Right ventricle myocardium inferior (tissue), 1 donor: ENCODE measurements at regions of chr9 and their contacts with region 1.

Region 1: DNA sequence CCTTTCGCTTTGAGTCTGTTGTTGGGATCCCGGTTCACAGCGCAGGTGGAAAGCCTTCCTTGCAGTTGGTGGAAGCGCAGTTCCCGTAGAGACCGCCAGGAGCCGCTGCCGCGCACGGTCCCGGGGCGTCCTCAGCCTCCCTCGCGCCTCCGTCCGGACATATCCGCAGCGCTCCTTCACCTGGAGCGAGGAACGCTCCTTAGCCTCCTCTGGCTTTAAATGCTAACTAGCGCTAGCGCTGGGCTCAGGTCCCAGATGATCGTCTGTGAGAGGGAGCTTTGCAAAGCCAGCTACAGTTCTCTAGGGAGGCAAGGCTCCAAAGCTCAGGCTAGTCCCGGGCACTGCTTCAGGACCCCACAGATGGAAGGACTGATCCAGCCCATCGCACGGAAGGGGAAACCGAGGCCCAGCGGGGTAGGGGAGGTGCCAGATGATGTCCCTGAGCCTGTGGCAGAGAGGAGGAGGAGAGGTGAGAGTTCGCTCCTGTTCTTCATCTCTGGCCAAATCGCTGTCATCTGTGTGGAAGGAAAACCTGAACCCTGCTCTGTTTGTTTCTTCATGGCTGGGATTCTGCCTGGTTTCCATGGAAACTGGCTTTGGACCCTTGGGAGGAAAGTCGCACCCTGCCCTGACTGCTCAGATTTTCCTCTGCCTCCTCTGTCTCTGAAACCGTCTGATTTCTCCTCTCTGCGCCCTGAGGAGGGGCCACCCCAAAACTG is 31.4 kb downstream of the COL15A1 start:
- DNase-seq: peak; percentile 93
- ATAC-seq: peak; percentile 59

Region 2: DNA sequence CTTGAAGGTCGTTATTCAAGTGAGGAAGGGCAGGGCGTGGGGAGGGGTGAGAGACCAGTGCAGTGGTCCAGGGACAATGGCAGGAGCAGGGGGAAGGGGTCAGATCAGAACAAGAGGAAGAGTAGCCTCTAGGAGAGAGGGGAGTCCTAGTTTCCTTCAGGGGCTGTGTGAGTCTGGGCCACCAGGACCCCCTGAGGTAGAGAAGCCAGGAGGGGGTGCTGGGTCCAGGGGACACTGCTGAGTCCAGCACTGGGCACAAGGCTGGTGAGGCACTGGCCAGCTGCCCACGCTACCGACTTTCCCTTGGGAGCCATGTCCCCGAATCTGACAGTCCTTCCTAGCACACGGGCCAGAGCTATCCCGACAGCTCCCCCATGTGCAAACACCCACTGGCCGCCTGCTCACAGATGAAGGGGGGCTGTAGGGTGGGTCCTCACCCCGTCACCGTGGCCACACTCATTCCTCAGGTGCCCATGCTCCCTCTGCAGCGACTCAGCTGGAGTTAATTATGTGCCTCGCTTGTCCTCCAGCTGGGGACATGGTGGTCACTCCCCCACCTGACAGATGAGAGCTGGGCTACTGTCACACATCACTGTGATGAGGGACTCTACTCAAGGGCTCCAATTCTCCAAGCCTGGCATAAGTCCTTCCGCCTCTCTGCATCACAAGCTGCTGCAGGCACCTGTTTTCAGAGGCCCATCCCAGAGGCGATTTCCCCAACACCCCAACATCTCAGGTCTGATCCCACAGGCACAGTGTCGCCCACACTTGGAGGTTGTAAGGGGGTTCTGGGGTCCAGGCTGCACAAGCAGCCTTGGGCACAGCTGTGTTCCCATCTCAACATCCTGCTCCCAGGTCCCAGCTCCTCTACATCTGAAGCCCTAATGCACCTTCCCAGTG is 381.5 kb before region 1 on chr9:
- intact Hi-C with region 1: no loop called
- DNase-seq: no peak
- ATAC-seq: no peak

Region 3: GRCh38 chr9:98867429-98868168 is 107.6 kb before region 1 on chr9:
- intact Hi-C with region 1: loop called (anchors 2 kb)
- DNase-seq: peak; percentile 88
- ATAC-seq: peak; percentile 85

Region 4: DNA sequence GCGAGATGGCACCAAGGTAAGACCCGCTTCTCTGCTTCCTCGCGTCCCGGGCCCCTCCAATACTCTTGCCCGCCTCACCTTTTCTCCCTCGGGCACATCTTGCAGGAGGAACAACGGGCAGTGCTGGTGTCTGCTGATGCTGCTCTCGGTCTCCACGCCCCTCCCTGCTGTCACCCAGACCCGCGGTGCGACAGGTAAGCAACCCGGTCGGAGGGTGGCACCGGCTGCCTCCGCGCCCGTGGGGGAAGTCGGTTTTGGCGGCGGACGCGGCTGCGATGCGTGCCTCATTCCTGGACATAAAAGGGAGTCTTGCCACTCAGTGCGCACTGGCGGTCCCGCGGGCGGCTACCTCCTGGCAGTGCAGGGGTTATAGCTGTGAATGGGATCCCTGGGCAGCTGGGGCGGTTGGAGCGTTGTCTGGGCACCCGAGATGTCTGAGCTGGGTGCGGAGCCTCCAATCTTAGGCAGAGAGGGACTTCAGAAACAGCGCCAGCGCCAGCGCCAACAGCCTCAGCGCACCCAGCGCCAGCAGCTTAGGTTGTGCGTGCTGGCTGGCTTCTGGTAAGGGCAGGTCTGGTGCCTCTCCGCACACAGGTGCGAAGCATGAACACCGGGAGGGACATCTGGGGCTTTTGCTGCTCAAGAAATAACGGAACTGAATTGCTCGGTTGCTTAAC is 31.0 kb before region 1 on chr9:
- intact Hi-C with region 1: loop called (anchors 1 kb)
- DNase-seq: peak; percentile 68
- ATAC-seq: peak; percentile 38

Region 5: GRCh38 chr9:99012942-99013512 is 37.9 kb after region 1 on chr9:
- intact Hi-C with region 1: loop called (anchors 5 kb)
- DNase-seq: no peak
- ATAC-seq: peak; percentile 73

Region 6: DNA sequence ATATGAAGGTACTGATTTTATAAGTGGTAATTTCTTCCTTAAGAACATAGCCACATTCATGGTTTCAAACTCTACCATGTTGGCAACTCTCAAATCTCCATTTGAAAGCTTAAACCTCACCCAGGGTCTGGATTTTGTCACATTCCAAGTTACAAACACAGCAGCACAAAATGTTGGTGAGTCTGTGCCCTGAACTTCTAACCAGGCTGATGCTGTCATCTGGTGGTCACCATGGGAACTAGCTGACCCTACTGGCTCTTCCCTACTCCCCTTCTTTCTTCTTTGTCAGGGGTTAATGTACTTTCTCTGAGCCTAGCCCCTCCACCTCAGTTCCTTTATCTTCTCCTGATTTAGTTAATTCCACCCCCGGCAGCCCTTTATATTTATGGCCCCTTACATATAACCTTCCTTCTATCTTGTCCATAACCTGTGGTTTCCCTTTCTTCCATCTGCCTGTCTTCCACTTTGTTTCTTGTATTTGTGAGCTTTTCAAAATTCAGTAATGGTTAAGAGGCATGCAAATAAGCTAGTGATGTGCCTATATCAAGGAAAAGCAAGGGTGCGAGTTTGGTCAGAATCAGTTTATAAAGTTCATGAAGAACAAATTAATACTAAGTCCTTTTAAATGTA is 165.6 kb after region 1 on chr9:
- intact Hi-C with region 1: loop called (anchors 10 kb)
- DNase-seq: no peak
- ATAC-seq: peak; percentile 85